ENCODE measurements at regions of chr15 and their contacts with region 1.

Region 1: DNA sequence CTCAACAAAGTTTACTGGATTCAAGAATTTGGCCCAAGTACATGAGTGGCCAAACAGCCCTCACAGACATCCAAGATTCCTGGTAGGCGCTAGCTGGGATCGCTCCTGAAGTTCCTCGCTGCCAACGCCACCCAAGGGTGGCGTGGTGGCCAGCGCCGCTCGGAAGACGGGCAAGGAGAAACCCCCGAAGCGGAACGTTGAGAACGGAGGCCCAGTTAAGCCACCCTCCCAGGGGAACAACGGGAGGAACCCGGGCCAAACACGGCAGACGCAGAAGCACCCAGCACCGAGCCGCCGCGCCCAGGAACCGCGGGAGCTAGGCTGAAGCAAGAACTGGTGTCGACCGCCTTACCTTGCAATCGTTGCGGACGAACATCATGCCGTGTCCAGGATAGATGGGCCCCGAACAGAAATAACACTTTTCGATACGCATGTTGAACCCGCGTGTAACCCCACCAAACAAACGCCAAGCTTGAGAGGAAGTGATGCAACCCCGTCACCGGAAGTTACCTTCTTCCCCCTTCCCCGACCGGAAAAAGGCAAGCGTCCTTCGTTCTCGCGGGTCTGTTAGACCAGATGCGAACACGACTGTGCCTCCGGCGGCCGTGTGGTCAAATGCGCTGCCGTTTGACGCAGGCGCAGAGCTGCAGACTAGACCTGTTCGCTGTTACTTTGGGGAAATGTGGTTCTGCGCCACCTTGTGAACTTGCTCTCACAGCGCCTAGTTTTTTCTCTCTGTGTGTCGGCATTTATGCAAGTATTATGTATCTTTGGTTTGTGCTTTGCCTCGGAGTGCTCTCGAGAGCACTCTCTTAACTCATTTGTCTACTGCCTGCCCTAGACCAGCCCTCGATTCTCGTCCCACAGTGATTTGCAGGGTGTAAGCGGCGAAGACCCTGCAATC is at the start of gene RSL24D1:
- DNase-seq: peak; percentile 92 to 100 (median 96)
- ATAC-seq: peak; percentile 95
- H3K4me3 ChIP-seq: peak within 1 kb of the TSS; percentile 82 to 90
- H3K4me3 Mint-ChIP-seq: no peak within 1 kb of the TSS
- H3K27ac ChIP-seq: peak within 1 kb of the TSS; percentile 94
- H3K27ac Mint-ChIP-seq: no peak within 1 kb of the TSS
- H3K4me1 ChIP-seq: peaks cover 37% of the 10 kb centered on the region
- H3K4me1 Mint-ChIP-seq: peaks cover 21% of the 10 kb centered on the region
- H3K27me3 ChIP-seq: no peaks in the 10 kb centered on the region
- H3K27me3 Mint-ChIP-seq: no peaks in the 10 kb centered on the region
- CTCF ChIP-seq: no peak
- total RNA-seq, gene RSL24D1: 181 to 186 TPM

Region 2: GRCh38 chr15:55494931-55495330 is 298.2 kb after region 1 on chr15:
- CTCF ChIA-PET with region 1: no interaction called
- POLR2A ChIA-PET with region 1: interaction called, 3 read pairs
- intact Hi-C with region 1: loop called in 1 of 2 experiments (anchors 1 kb)
- DNase-seq: peak in 1 of 9 experiments; percentile 27
- ATAC-seq: peak; percentile 16
- H3K4me3 ChIP-seq: no peak overlapping the region
- H3K4me3 Mint-ChIP-seq: no peak overlapping the region
- H3K27ac ChIP-seq: no peak overlapping the region
- H3K27ac Mint-ChIP-seq: no peak overlapping the region
- H3K4me1 ChIP-seq: peaks cover 9% of the 10 kb centered on the region
- H3K4me1 Mint-ChIP-seq: peaks cover 9% of the 10 kb centered on the region
- H3K27me3 ChIP-seq: no peaks in the 10 kb centered on the region
- H3K27me3 Mint-ChIP-seq: no peaks in the 10 kb centered on the region
- CTCF ChIP-seq: no peak